GM12878 (cell line): ENCODE measurements at regions of chr1 and their contacts with region 1.

Region 1: DNA sequence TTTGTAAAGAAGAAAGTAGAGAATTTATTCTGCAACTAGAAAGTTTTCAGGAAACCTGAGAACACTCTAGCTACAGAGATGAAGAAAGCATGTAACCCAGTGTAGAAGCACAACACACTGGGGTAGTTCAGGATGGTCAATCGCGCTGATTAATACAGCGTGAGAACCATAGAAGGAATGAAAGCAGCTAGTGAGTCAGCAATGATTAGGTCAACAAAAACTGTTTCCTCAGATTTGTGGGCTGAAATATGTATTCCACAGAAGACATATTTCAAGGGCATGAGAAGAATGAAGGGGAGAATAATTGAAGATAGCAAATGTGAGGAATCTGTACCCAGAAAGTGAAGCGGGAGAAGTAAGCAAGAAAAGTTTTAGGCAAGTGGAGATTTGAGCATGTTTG is 97.8 kb upstream of the ADGRL2 start:
- DNase-seq: no peak
- ATAC-seq: peak; percentile 86
- H3K4me3 ChIP-seq: no peak overlapping the region
- H3K27ac ChIP-seq: no peak overlapping the region
- H3K4me1 ChIP-seq: no peaks in the 10 kb centered on the region
- H3K27me3 ChIP-seq: no peaks in the 10 kb centered on the region
- CTCF ChIP-seq: no peak
- EP300 ChIP-seq: no peak
- POLR2A ChIP-seq: no peak
- RAD21 ChIP-seq: no peak

Region 2: DNA sequence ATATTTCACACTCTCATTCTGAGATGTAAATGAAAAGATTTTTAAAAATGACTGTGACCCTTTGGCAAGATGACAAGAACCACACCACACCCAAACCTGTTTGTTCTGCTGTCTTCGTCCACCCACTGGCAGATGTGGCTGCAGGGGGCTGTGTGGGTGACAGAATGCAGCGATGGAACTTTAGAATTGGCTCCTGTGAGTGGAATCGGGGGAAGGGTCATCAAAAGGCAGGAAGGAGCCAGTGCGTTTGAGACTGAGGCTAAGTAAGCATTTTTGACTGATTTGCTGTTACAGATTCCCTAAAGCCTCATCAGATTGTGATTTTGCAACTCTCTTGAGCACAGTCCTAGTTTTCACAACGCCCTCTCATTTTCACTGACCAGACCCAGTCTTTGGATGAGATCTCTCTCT is 13.4 kb before region 1 on chr1:
- CTCF ChIA-PET with region 1: no interaction called
- POLR2A ChIA-PET with region 1: no interaction called
- RAD21 ChIA-PET with region 1: no interaction called
- SMC1A ChIA-PET with region 1: interaction called, 10 read pairs
- in situ Hi-C with region 1: no loop called
- intact Hi-C with region 1: no loop called
- DNase-seq: no peak
- ATAC-seq: peak; percentile 83
- H3K4me3 ChIP-seq: no peak overlapping the region
- H3K27ac ChIP-seq: no peak overlapping the region
- H3K4me1 ChIP-seq: no peaks in the 10 kb centered on the region; the same call in 1 of the 2 replicates
- H3K27me3 ChIP-seq: no peaks in the 10 kb centered on the region
- CTCF ChIP-seq: no peak
- EP300 ChIP-seq: 0 out of 4 replicates have a peak, but pooled peaks of 1 of the 2 experiments have one; percentile 18
- POLR2A ChIP-seq: no peak
- RAD21 ChIP-seq: no peak

Region 3: DNA sequence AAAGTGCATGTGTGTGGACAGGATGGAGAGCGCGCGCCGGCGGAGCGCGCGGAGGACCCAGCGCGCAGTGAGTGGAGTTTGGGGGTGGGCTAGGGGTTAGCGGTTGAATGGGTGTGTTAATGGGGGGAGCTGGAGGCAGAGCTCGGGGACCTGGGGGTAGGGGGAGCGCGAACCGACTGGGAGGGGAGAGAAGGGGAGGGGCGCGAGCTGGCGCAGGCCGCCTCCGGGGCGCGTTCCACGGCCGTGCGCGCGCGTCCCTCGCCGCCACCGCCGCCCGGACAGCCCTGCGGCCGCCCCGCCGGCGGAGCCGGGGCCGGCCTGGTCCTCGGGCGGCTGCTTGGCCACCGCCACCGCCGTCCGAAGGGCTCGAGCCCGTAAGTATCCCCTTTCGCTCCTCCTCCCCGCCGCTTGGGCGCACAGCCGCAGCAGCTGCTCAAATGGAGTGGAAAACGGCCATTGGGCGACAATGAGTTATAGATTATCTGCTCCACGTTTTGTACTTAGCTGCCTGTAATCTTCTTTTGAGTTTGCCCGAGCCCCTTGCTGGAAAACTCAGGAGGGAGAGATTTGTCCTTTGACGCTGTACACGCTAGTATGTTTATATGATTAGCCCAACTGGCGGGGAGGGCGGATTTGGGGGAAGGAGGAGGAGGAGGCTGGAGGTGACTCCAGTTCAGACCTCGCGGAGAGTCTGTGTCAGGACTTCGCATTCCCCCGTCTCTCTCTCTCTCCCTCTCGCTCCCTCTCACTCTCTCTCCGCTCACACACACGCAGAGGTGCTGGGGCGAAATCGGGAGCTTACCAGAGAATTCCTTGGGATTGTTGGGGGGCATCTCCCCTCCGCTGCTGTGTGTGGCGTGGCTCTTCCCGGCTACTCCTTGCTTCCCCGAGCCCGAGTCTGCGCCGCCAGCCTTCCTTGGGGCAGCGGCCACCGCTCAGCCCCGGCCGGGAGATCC is 98.1 kb after region 1 on chr1 and contains the start of gene ADGRL2:
- CTCF ChIA-PET with region 1: no interaction called
- POLR2A ChIA-PET with region 1: no interaction called
- RAD21 ChIA-PET with region 1: no interaction called
- SMC1A ChIA-PET with region 1: no interaction called
- in situ Hi-C with region 1: no loop called
- intact Hi-C with region 1: no loop called
- DNase-seq: no peak
- ATAC-seq: peak; percentile 76
- H3K4me3 ChIP-seq: no peak within 1 kb of the TSS
- H3K27ac ChIP-seq: no peak within 1 kb of the TSS
- H3K4me1 ChIP-seq: no peaks in the 10 kb centered on the region
- H3K27me3 ChIP-seq: peaks cover 10 to 11% of the 10 kb centered on the region in 2 experiments
- CTCF ChIP-seq: no peak
- EP300 ChIP-seq: no peak
- POLR2A ChIP-seq: no peak
- RAD21 ChIP-seq: no peak
- polyA plus RNA-seq, gene ADGRL2: 0.03 to 0.18 TPM